Activated B cell treated with CpG ODN at 0.5 μM for 24 hours (primary cell): ENCODE measurements at regions of chr1 and their contacts with region 1.

Region 1: DNA sequence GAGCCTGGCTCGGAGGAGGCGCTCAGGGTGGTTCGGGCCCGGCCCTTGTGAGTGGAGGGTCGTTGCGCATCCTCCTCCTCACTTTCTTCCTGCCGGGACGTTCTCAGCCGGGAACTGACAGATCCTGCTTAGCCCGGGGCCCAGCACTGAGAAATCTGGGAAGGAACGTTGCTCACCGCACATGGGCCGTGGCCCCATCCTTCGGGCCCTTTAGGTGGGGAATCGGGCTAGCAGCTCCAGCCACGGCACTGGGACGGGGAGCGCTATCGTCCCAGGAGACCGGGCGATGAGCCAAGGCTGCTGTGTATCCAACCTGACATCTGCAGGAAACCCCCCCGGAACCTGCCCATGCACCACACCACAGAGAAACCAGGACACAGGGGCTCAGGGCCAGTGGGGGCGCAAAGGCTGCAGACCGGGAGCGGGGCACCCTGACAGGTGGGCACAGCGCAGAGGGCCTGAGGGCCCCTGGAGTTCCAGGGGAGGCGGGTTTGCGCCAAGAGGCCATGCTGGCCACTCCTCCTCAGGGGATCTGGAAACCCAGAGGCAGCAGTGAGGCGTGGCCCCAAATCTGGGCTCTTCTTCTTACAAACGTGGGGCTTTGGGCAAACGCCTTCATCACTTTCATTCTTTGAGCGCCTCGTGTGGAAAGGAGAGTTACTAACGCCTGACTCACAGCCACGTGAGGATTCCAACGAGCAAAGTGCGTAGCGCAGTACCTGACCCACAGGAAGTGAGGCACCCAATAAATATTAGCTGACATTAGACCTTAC is at the start of gene SH2D5:
- DNase-seq: peak; percentile 45
- ATAC-seq: peak; percentile 74
- H3K4me3 Mint-ChIP-seq: peak within 1 kb of the TSS; percentile 85
- H3K27ac Mint-ChIP-seq: peak within 1 kb of the TSS; percentile 62
- H3K4me1 Mint-ChIP-seq: peaks cover 29% of the 10 kb centered on the region
- H3K27me3 Mint-ChIP-seq: peaks cover 11% of the 10 kb centered on the region
- CTCF ChIP-seq: no peak
- total RNA-seq, gene SH2D5: 0.69 and 0.89 TPM in 2 replicates

Region 2: DNA sequence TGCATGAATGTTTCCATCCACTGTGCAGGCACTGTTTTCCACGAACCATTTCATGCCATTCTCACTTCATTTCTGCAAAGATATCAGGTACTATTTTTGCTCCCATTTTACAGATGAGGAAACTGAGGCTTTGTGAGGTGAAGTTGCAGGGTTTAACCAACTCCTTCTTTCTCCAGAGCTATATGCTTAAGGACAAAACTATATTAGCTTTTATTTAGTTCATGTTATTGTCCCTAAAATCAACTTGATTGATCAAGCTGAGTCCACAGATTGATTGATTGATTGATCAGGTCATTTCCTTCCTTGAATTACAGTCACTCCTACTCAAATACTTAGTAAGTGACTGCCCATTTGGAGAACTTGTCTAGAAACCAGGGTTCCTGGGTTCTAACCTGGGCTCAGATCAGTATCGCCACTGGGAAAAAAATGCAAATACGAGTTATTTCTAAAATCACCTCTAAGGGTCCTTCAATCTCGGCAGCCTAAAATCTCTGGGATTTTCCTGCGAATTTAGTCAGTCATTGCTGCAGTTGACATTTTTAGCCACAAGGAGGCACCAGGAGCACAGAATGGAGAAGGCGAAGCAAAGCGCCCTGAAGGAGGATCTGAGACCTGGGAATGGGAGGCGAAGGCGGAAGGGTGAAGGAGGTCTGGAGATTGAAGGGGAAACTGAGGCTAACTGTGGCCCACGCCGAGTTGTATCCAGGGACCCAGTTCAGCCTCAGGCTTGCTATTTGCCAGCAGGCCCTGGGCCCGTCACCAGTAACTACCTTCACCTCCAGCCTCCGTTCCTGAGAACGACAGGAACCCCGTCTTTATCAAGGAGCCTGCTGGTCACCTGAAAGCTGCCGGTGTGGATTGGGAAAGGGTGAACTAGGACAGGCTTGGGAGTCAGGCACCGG is 210.6 kb before region 1 on chr1:
- CTCF ChIA-PET with region 1: interaction called, 4 read pairs
- POLR2A ChIA-PET with region 1: interaction called, 12 read pairs
- intact Hi-C with region 1: loop called (anchors 2 kb)
- DNase-seq: peak; percentile 30
- ATAC-seq: peak; percentile 60
- H3K4me3 Mint-ChIP-seq: no peak overlapping the region
- H3K27ac Mint-ChIP-seq: no peak overlapping the region
- H3K4me1 Mint-ChIP-seq: no peaks in the 10 kb centered on the region
- H3K27me3 Mint-ChIP-seq: peaks cover 18% of the 10 kb centered on the region
- CTCF ChIP-seq: peak; percentile 35

Region 3: DNA sequence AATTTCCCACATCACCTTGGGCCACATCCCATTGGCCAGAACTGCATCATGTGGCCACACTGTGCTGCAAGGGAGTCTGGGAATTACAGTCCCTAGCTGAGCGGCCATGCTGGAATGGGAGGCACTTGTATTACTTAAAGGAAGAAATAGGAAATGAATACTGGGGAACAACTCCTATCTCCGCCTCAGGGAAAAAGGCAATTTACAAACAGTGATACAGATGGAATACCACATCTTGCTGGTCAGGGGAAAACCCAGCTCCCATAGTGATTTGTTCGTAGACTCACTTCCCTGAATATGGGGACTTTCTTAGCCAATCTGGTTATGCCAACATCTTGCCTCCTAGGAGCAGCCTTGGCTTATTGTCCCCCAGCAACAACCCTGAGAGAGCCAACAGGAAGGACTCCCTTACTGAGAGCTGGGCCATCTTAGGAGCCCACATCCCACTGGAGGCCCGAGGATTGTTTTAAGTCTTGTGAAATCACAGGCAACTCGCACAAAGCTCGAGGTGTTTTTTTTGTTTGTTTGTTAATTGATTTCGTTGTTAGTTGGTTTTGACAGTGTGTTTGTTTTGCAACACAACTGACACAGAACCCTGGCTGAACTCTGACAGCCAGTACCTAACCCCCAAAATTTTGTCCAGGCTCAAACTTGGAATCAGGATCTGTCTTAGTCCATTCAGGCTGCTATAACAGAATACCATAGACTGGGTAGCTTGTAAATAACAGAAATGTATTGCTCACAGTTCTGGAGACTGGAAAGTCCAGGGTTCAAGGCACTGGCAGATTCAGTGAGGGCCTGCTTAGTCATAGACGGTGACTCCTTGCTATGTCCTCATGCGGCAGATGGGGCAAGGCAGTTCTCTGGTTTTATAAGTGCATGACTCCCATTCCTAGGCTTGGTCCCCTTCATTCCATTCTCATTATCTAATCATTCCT is 129.0 kb before region 1 on chr1:
- CTCF ChIA-PET with region 1: no interaction called
- POLR2A ChIA-PET with region 1: no interaction called
- intact Hi-C with region 1: no loop called
- DNase-seq: no peak
- ATAC-seq: no peak
- H3K4me3 Mint-ChIP-seq: no peak overlapping the region
- H3K27ac Mint-ChIP-seq: no peak overlapping the region
- H3K4me1 Mint-ChIP-seq: no peaks in the 10 kb centered on the region
- H3K27me3 Mint-ChIP-seq: peaks cover 8% of the 10 kb centered on the region
- CTCF ChIP-seq: no peak

Region 4: DNA sequence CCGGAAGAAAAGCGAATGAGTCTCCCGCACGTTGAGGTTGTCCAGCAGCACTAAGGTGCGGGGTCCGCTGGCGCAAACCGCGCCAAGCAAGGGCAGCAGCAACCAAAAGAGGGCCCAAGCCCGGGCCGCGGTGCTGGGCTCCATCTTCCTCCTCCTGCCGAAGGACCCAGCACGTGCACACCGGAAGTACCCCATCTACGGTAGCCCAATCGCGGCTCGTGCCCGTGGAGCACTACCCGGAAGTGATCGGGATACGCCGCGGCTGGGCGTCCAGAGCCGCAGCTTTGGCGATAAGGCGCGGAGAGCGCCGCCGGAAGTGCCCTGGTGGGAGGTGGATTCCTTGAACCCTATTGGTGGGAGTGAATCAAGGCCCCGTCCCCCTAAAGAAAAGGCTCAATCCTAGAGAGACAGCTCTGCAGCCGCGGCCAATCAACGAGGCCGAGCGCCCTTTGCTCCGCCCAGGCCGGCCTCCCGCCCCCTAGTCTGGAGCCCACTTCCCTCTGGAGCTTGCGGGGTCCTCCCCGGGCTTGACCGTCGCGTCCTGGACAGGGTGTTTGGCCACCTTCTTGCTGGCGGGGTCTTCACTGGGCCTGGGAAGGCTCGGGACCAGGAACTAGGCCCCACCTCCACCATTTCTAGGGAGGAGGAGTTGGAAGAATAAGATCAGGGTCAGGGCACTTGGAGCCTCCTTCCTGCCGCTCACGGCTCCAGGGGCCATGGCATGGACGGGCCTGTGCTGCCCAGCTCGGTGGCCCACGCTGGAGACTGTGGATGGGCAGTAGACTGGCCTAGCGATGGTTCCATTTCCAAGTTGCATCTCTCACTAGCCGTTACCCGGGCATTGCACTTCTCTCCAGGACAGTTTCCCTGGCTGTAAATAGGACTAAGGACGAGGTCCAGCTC is 71.3 kb before region 1 on chr1 and contains the start of gene DDOST:
- CTCF ChIA-PET with region 1: no interaction called
- POLR2A ChIA-PET with region 1: interaction called, 5 read pairs
- intact Hi-C with region 1: loop called (anchors 1 kb)
- DNase-seq: peak; percentile 83
- ATAC-seq: peak; percentile 95
- H3K4me3 Mint-ChIP-seq: peak within 1 kb of the TSS; percentile 99
- H3K27ac Mint-ChIP-seq: peak within 1 kb of the TSS; percentile 98
- H3K4me1 Mint-ChIP-seq: peaks cover 33% of the 10 kb centered on the region
- H3K27me3 Mint-ChIP-seq: no peaks in the 10 kb centered on the region
- CTCF ChIP-seq: no peak
- total RNA-seq, gene DDOST: 132 TPM in 2 replicates

Region 5: GRCh38 chr1:20696397-20697329 is 36.1 kb before region 1 on chr1:
- CTCF ChIA-PET with region 1: interaction called, 9 read pairs
- POLR2A ChIA-PET with region 1: interaction called, 3 read pairs
- intact Hi-C with region 1: loop called (anchors 1 kb)
- DNase-seq: peak; percentile 67
- ATAC-seq: peak; percentile 95
- H3K4me3 Mint-ChIP-seq: peak overlapping the region; percentile 87
- H3K27ac Mint-ChIP-seq: no peak overlapping the region
- H3K4me1 Mint-ChIP-seq: peaks cover 4% of the 10 kb centered on the region
- H3K27me3 Mint-ChIP-seq: no peaks in the 10 kb centered on the region
- CTCF ChIP-seq: peak; percentile 72

Region 6: DNA sequence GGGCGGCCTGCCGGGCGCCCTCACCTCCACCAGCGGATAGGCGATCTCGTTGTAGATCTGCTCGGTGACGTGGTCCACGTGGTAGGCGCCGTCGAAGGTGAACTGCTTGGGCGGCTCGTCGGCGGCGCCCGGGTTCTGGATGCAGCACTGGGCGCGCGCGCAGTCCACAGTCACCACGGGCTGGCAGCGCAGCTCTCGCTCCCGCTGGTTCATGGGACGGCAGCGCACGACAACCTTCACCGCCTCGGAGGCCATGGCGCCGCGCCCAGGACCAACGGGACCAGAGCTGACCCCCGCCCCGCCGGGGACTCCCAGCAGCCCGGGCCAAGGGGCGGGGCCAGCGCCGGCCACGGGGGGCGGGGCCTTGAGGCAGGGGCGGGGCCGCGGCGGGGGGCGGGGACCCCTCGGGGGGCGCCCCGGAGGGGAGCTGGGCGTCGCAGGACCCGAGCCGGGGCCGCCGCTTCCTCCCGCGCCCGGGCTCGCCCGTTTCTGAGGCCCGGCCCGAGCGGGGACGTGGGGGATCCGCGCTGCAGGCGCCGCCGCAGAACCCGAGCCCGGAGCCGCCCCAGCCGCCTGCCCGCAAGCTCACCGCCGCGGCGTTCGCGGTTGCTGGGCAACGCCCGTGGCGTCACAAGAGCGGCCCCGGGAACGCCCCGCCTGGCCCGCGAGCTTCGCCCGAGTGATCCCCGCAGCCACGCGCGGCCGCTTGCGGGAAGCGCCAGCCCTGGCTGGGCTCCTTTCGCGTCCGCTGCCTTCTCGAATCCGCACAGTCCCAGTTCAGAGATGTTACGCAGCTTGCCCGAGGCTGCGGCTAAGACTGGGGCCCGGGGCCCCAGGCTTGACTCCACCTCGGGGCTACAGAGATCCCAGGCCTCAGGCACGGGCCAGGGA is 15.1 kb before region 1 on chr1 and contains the start of gene KIF17:
- CTCF ChIA-PET with region 1: no interaction called
- POLR2A ChIA-PET with region 1: interaction called, 3 read pairs
- intact Hi-C with region 1: loop called (anchors 1 kb)
- DNase-seq: peak; percentile 80
- ATAC-seq: peak; percentile 81
- H3K4me3 Mint-ChIP-seq: peak within 1 kb of the TSS; percentile 65
- H3K27ac Mint-ChIP-seq: no peak within 1 kb of the TSS
- H3K4me1 Mint-ChIP-seq: peaks cover 11% of the 10 kb centered on the region
- H3K27me3 Mint-ChIP-seq: peaks cover 19% of the 10 kb centered on the region
- CTCF ChIP-seq: no peak
- total RNA-seq, gene KIF17: not detected in 2 replicates